Motor neuron (in vitro differentiated cells): ENCODE measurements at regions of chr14 and their contacts with region 1.

Region 1: DNA sequence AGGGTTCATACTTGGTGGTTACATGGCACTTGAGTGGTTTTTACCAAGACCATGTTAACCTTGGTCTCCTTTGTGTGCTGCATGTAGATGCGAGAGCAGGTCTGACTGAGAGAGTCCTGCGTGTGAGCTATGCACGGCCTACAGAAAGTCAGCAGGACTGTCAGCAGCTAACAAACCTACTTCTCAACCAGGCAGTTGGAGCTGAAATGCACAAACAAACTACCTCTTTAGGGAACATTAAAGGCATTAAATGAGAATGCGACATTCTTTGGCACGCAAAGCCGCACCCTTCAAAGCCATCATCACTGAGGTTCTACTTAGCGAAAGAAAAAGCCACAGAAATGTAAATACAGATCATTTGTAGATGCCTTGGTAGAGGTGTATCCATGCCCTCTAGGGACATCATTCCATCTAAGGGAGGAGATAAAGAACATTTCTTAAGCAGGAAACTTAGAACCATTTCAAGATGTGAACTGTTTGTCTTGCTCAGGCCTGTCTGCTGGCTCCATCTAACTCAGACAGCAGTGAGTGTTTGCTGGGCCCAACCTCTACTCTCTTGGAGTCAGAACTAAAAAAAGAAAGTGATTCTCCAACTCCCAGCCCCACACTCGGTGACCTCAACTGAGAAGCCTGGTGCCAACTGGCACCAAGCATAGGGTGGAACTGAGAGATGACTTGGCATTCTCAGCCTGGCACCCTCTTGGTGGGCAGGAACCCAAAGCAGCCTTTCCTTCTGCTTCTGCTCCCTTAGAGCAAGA is 63.4 kb upstream of the MBIP start:
- ATAC-seq: peak in 4 of 8 experiments; percentile 40 to 95 (median 68)
- H3K4me3 ChIP-seq: no peak overlapping the region
- H3K27ac ChIP-seq: peak overlapping the region in 1 of 2 donors; percentile 30
- H3K4me1 ChIP-seq: peaks cover 0 to 15% of the 10 kb centered on the region in 2 donors

Region 2: DNA sequence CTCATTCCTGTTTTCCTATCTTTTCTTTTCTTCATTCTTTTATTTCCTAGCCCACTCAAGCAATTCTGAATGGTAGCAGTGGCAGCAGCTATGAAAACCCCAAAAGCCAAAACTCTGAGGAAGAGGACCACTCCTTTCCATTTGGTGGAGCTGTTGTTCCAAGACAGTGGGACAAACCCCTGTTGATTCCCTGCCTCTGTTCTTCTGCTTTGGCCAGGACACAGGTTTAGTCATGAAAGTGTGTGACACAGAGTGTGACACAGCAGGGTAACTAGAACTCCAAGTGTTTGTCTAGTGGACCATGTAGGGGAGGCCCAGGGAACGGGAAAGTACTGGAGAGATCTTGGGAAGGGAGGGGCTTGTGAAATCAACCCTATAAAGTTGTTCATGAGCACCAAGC is 278.5 kb before region 1 on chr14:
- in situ Hi-C with region 1: loop called in 1 of 9 experiments (anchors 25 kb)
- ATAC-seq: peak in 3 of 8 experiments; percentile 42 to 82 (median 78)
- H3K4me3 ChIP-seq: no peak overlapping the region
- H3K27ac ChIP-seq: no peak overlapping the region
- H3K4me1 ChIP-seq: no peaks in the 10 kb centered on the region